ENCODE measurements at regions of chr20 and their contacts with region 1.

Region 1: DNA sequence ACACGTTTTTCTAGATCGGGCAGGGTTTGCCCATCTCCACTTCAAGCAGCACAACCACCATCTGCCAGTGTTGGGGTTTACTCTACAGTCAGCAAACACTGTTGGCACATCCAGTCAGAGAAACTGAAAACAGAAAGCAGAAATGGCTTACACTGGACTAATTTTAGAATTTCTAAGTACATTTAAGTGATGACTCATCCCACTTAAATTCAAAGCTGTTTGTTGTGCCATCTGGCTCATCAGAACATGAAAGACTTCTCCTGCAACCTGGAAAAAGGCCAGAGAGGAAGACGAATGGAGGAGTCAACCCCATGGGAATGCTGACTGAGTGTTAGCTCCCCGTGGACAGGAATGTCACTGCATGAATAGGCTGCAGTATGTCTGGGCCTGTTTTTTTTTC is 21.8 kb downstream of the FAM209B start:
- DNase-seq: peak in 3 of 4 donors; percentile 17 to 71 (median 33)
- ATAC-seq: peak; percentile 65
- H3K4me3 ChIP-seq: no peak overlapping the region
- H3K27ac ChIP-seq: no peak overlapping the region
- H3K4me1 ChIP-seq: no peaks in the 10 kb centered on the region
- H3K27me3 ChIP-seq: no peaks in the 10 kb centered on the region
- CTCF ChIP-seq: no peak
- POLR2A ChIP-seq: no peak

Region 2: GRCh38 chr20:56974499-56975236 is 419.8 kb after region 1 on chr20:
- intact Hi-C with region 1: loop called (anchors 10 kb)
- DNase-seq: peak; percentile 46 to 69 (median 63)
- ATAC-seq: no peak
- H3K4me3 ChIP-seq: no peak overlapping the region
- H3K27ac ChIP-seq: no peak overlapping the region
- H3K4me1 ChIP-seq: no peaks in the 10 kb centered on the region
- H3K27me3 ChIP-seq: peaks cover 0 to 5% of the 10 kb centered on the region in 2 donors
- CTCF ChIP-seq: peak; percentile 38 to 73 (median 63)
- POLR2A ChIP-seq: no peak